ENCODE measurements at regions of chr14 and their contacts with region 1.

Region 1: DNA sequence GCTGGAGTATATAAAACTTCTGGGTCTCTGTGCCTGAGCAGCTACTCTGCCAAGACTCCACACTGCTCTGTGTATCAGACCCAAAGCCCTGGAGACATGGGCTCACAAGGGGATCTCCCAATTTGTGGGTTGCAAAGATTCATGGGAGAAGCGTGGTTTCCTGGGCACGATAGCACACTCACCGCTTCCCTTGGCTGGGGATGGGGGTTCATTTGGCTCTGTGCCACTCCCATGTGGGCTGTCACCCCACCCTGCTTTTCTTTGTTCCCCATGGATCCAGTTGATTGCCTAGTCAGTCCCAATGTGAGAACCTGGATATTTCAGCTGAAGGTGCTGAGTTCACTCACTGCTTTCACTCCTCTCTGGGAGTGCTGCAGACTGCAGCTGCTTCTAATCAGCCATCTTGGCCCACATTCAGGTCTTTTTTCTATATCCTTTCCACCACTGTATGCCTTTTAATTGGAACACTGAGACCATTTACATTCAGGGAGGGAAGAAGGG is 40.0 kb upstream of the PCNX4 start:
- DNase-seq: peak in 6 of 9 experiments; percentile 13 to 64 (median 35)
- ATAC-seq: peak; percentile 68
- H3K4me3 ChIP-seq: peak overlapping the region in 1 of 2 experiments; percentile 1
- H3K4me3 Mint-ChIP-seq: peak overlapping the region; percentile 52
- H3K27ac ChIP-seq: no peak overlapping the region
- H3K27ac Mint-ChIP-seq: peak overlapping the region; percentile 4
- H3K4me1 ChIP-seq: peaks cover 36% of the 10 kb centered on the region
- H3K4me1 Mint-ChIP-seq: peaks cover 46% of the 10 kb centered on the region
- H3K27me3 ChIP-seq: no peaks in the 10 kb centered on the region
- H3K27me3 Mint-ChIP-seq: peaks cover 5% of the 10 kb centered on the region
- CTCF ChIP-seq: no peak

Region 2: GRCh38 chr14:59918824-59919569 is 132.8 kb before region 1 on chr14:
- CTCF ChIA-PET with region 1: no interaction called
- POLR2A ChIA-PET with region 1: no interaction called
- intact Hi-C with region 1: no loop called
- DNase-seq: peak in 3 of 9 experiments; percentile 12 to 54 (median 26)
- ATAC-seq: peak; percentile 57
- H3K4me3 ChIP-seq: peak overlapping the region; percentile 43 to 72
- H3K4me3 Mint-ChIP-seq: peak overlapping the region; percentile 77
- H3K27ac ChIP-seq: no peak overlapping the region
- H3K27ac Mint-ChIP-seq: no peak overlapping the region
- H3K4me1 ChIP-seq: peaks cover 6% of the 10 kb centered on the region
- H3K4me1 Mint-ChIP-seq: peaks cover 13% of the 10 kb centered on the region
- H3K27me3 ChIP-seq: no peaks in the 10 kb centered on the region
- H3K27me3 Mint-ChIP-seq: peaks cover 21% of the 10 kb centered on the region
- CTCF ChIP-seq: peak; percentile 16

Region 3: DNA sequence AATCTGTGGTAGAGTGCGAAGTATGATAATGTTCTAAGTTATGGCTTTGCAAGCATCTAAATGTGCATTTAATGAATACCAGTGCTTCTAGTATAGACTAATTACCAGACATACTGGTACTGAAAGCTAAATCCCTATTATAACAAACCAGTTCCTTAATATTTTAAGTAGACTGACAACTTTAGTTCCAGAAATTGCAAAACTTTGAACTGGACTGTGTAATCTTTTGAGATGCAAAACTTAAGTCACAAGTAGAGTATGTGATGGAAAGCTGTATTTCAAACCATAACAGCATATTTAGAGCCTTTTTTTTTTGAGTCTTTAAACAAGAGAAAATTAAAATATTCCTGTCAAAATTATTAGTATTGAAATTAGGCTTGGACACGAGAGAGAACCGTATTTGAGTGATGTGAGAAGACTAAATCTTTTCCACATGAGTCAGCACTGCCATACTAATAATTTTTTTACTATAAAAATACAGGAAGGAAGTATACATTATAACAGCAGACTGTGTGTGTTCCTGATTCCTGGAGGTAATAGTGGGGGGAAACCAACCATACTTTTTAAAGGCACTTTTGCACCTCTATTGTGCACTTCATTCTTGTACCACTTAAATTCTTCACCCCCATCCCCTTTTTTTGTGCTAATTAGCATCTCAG is 242.8 kb after region 1 on chr14:
- CTCF ChIA-PET with region 1: no interaction called
- POLR2A ChIA-PET with region 1: no interaction called
- intact Hi-C with region 1: loop called in 1 of 2 experiments (anchors 5 kb)
- DNase-seq: no peak
- ATAC-seq: no peak
- H3K4me3 ChIP-seq: no peak overlapping the region
- H3K4me3 Mint-ChIP-seq: no peak overlapping the region
- H3K27ac ChIP-seq: no peak overlapping the region
- H3K27ac Mint-ChIP-seq: no peak overlapping the region
- H3K4me1 ChIP-seq: no peaks in the 10 kb centered on the region
- H3K4me1 Mint-ChIP-seq: no peaks in the 10 kb centered on the region
- H3K27me3 ChIP-seq: no peaks in the 10 kb centered on the region
- H3K27me3 Mint-ChIP-seq: no peaks in the 10 kb centered on the region
- CTCF ChIP-seq: no peak

Measured in CD8-positive, alpha-beta T cell (primary cell).